H1 (cell line): ENCODE measurements at regions of chr10 and their contacts with region 1.

Region 1: DNA sequence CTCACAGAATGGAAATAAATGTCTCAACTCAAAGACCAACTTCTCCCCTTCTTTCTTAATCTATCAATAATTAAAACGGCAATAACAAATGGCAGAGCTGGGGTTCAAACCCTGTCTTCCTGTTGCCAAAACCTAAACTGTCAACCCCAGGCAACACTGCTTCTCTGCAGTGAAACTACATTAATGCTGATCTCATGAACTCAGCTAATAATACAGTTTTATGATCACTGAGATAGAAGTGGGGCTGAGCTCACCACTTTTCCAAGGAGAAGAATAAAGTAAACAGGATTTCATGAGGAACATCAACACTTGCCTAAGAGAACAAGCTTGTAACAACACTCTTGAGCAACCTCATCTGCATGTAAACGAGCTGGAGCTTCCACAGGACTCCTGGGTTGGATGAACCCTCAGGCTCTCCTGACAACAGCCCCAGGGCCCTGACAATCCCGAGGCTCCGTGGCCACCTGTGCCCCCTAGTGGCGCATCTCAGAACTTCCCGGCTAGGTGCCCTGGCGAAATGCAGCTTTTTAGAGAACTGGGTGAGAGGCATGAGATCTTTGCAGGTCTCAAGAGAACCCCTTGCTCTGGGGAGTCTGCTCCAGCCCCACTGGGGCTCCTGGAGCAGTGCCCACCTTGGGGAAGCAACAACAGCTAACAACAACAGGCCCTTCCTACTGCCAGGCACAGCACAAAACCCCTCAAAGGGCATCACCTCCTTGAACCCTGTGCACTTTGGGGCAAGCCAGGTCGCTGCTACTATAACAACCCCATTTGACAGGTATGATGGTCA is 169.3 kb downstream of the SH3PXD2A start:
- DNase-seq: peak; percentile 50 to 97
- H3K4me3 ChIP-seq: no peak overlapping the region
- H3K27ac ChIP-seq: no peak overlapping the region
- H3K4me1 ChIP-seq: peaks cover 0 to 10% (median 4%) of the 10 kb centered on the region in 4 experiments; a peak in 3 of 7 replicates
- H3K27me3 ChIP-seq: peaks cover 0 to 4% (median 0%) of the 10 kb centered on the region in 4 experiments; a peak in 1 of 7 replicates
- CTCF ChIP-seq: peak; percentile 96 to 98 (median 97)
- EP300 ChIP-seq: no peak
- POLR2A ChIP-seq: no peak
- RAD21 ChIP-seq: peak; percentile 92 to 98

Region 2: GRCh38 chr10:103491493-103492381 is 194.3 kb before region 1 on chr10:
- CTCF ChIA-PET with region 1: no interaction called
- POLR2A ChIA-PET with region 1: no interaction called
- DNase-seq: no peak
- H3K4me3 ChIP-seq: no peak overlapping the region
- H3K27ac ChIP-seq: no peak overlapping the region
- H3K4me1 ChIP-seq: peaks cover 0 to 4% (median 3%) of the 10 kb centered on the region in 4 experiments; a peak in 5 of 7 replicates
- H3K27me3 ChIP-seq: peaks cover 8 to 36% (median 28%) of the 10 kb centered on the region in 4 experiments
- CTCF ChIP-seq: no peak
- EP300 ChIP-seq: no peak
- POLR2A ChIP-seq: no peak
- RAD21 ChIP-seq: no peak

Region 3: DNA sequence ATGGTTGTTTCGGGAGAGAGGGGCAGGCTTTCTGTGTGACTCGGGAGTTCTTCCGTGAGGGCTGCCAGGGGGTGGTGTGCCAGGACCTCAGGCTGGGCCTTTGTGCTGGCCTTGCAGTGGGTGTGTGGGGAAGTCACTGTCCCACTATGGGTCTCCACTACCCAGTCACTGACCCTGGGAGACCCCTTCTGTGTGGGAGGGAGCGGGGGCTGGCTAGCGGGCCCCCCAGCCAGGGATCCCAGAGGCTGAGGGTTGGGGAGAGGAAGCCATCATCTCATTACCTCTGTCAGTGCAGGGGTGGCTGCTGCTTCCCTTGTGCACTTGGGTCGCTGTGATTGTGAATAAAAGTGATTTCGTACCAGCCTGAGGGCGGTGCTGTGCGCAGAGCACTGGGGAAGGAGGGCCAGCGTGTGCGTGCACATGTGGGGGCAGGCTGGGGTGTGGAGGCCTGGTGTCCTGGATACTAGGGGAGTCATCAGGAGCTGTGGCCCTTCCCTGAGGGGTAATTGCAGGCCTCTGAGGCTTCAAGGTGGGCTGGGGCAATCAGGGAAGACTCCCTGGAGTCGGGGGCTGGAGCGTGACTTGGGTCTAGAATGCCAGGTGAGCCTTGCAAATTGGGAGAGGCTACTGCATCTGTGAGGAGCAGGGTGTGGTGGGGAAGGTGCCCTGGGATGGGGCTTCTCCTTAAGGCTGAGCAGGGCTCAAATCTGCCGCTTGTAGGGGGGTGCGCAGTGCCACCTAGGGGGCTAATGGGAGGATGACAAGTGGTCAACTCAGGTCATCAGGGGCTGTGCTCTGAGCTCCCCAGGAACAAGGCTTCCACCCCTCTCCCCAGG is 93.7 kb before region 1 on chr10:
- CTCF ChIA-PET with region 1: interaction called, 448 read pairs
- POLR2A ChIA-PET with region 1: no interaction called
- DNase-seq: peak; percentile 46 to 87
- H3K4me3 ChIP-seq: no peak overlapping the region
- H3K27ac ChIP-seq: no peak overlapping the region
- H3K4me1 ChIP-seq: peaks cover 0 to 2% (median 0%) of the 10 kb centered on the region in 4 experiments; a peak in 1 of 7 replicates
- H3K27me3 ChIP-seq: no peaks in the 10 kb centered on the region; a peak in 2 of 7 replicates
- CTCF ChIP-seq: peak; percentile 84 to 93 (median 88)
- EP300 ChIP-seq: no peak
- POLR2A ChIP-seq: no peak
- RAD21 ChIP-seq: peak; percentile 78 to 88

Region 4: DNA sequence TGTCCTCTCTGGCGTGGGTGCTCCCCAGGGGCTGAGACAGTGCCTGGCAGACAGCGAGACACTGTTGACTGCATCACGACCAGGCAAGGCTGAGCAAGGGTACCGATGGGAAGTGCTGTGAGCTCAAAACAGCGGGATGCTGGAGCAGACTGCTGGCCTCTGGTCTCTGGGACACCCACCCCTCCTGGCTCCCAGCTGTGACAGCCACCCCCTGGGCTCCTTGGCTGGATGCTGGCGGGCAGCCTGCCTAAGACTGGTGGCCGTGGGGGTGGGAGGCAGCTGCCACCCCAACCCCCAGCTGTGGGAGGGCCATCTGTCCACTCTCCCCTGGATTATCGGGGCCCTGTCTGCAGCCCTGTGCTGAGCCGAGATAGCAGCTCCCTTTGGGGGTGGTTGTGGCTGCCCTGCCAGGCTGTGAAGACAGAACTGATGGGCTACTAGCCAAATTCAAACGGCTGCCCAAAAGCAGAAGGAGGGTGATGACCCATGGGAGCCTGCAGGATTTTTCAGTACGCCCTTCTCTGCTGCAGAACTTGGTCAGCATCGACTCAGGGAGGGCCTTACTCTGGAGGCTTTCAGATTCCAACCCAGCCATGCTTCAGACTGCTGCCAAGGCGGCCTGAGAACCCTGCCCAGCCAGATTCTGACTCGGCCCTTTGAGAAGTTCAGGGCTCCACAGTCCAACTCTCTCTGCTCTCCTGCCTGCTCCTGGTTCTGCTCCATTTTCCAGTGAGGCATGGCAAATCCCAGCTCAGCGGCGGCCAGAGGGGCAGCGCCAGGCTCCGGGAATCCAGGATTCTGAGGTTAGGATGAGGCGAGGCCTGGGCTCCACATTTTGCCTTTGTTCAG is 67.3 kb before region 1 on chr10:
- CTCF ChIA-PET with region 1: interaction called, 114 read pairs
- POLR2A ChIA-PET with region 1: no interaction called
- DNase-seq: no peak
- H3K4me3 ChIP-seq: no peak overlapping the region
- H3K27ac ChIP-seq: no peak overlapping the region
- H3K4me1 ChIP-seq: no peaks in the 10 kb centered on the region; a peak in 1 of 7 replicates
- H3K27me3 ChIP-seq: no peaks in the 10 kb centered on the region
- CTCF ChIP-seq: no peak
- EP300 ChIP-seq: no peak
- POLR2A ChIP-seq: no peak
- RAD21 ChIP-seq: no peak

Region 5: GRCh38 chr10:103659674-103660363 is 26.3 kb before region 1 on chr10:
- CTCF ChIA-PET with region 1: interaction called, 336 read pairs
- POLR2A ChIA-PET with region 1: interaction called, 3 read pairs
- DNase-seq: no peak
- H3K4me3 ChIP-seq: peak overlapping the region in 2 of 4 experiments; percentile 8 to 51; a peak in 1 of 8 replicates
- H3K27ac ChIP-seq: no peak overlapping the region
- H3K4me1 ChIP-seq: peaks cover 0 to 27% (median 18%) of the 10 kb centered on the region in 4 experiments; a peak in 6 of 7 replicates
- H3K27me3 ChIP-seq: no peaks in the 10 kb centered on the region; a peak in 1 of 7 replicates
- CTCF ChIP-seq: no peak
- EP300 ChIP-seq: no peak
- POLR2A ChIP-seq: no peak
- RAD21 ChIP-seq: no peak

Region 6: DNA sequence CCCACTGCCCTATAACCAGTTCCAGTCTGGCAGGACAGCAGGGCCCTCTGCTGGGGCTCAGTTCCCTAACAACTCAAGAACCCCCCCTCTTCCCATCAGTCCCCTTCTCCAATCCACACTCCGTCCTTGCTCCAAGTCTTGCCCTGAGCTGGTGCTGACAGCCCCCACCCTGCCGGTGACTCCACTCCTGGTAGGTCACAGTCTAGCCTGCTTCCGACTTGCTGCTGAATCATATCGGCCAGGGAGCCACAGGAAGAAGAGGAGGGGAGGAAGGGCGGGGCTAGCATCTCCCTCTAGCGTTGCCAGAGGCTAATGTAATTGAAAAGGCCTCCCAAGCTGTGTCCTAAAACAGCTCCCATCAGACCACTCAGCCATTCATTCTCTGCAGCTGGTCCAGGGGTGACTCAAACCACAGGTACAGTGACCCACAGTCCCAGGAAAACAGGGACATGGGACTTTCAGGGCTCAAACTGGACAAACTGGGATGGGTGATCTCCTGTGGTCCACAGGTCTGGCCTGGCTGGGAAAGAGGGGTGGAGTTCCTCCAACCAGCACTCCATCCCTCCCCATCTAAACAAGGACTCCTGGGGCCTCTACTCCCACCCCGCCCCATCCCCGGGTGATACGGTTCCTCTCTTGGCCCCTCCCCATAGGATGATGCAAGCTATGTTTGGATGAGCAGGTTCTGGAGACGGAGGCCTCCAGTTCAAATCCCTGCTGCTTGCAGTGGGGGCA is 10.5 kb after region 1 on chr10:
- CTCF ChIA-PET with region 1: interaction called, 19 read pairs
- POLR2A ChIA-PET with region 1: interaction called, 3 read pairs
- DNase-seq: peak; percentile 53 to 73
- H3K4me3 ChIP-seq: peak overlapping the region in 1 of 4 experiments; percentile 18; a peak in 1 of 8 replicates
- H3K27ac ChIP-seq: no peak overlapping the region
- H3K4me1 ChIP-seq: peaks cover 3 to 21% (median 14%) of the 10 kb centered on the region in 4 experiments
- H3K27me3 ChIP-seq: peaks cover 7 to 35% (median 30%) of the 10 kb centered on the region in 4 experiments
- CTCF ChIP-seq: peak; percentile 22 to 38 (median 37)
- EP300 ChIP-seq: no peak
- POLR2A ChIP-seq: no peak
- RAD21 ChIP-seq: peak; percentile 23 to 28; a peak in 3 of 4 replicates

Region 7: DNA sequence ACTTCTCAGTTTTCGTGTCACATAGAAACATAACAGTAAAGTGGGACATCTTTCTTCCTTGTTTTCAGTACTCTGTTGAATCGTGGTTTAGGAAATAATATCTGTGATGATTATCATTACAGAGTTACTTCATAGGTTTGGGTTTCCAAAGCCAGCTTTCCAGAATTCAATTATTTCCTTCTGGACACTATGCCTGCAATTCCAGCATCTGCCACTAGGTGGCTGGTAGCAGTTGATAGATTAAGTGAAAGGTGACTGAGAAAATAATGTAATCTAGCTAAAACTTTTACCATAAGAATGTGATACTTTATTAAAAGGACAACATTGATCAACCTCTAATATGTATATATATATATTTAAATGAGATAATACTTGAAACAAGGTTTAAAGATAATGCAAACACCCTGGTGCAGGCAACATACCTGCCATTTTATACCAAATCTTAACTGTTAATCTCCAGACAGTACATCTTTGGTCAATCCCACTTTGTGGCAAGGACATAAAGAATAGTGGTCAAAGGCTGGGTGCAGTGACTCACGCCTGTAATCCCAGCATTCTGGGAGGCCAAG is 66.7 kb after region 1 on chr10:
- CTCF ChIA-PET with region 1: interaction called, 14 read pairs
- POLR2A ChIA-PET with region 1: no interaction called
- DNase-seq: peak in 1 of 2 experiments; percentile 76
- H3K4me3 ChIP-seq: no peak overlapping the region
- H3K27ac ChIP-seq: no peak overlapping the region
- H3K4me1 ChIP-seq: peaks cover 4 to 11% (median 7%) of the 10 kb centered on the region in 4 experiments
- H3K27me3 ChIP-seq: no peaks in the 10 kb centered on the region
- CTCF ChIP-seq: peak in 2 of 3 experiments; percentile 46 to 73; a peak in 2 of 4 replicates
- EP300 ChIP-seq: no peak
- POLR2A ChIP-seq: no peak
- RAD21 ChIP-seq: peak; percentile 23 to 43; a peak in 2 of 4 replicates

Region 8: GRCh38 chr10:103820101-103821062 is 134.3 kb after region 1 on chr10:
- CTCF ChIA-PET with region 1: no interaction called
- POLR2A ChIA-PET with region 1: no interaction called
- DNase-seq: no peak
- H3K4me3 ChIP-seq: no peak overlapping the region
- H3K27ac ChIP-seq: no peak overlapping the region
- H3K4me1 ChIP-seq: peaks cover 0 to 4% (median under 1%) of the 10 kb centered on the region in 4 experiments; a peak in 4 of 7 replicates
- H3K27me3 ChIP-seq: no peaks in the 10 kb centered on the region
- CTCF ChIP-seq: no peak
- EP300 ChIP-seq: no peak
- POLR2A ChIP-seq: no peak
- RAD21 ChIP-seq: no peak

Region 9: GRCh38 chr10:104284846-104285245 is 598.8 kb after region 1 on chr10:
- CTCF ChIA-PET with region 1: no interaction called
- POLR2A ChIA-PET with region 1: no interaction called
- DNase-seq: no peak
- H3K4me3 ChIP-seq: no peak overlapping the region
- H3K27ac ChIP-seq: no peak overlapping the region
- H3K4me1 ChIP-seq: no peaks in the 10 kb centered on the region
- H3K27me3 ChIP-seq: no peaks in the 10 kb centered on the region
- CTCF ChIP-seq: no peak
- EP300 ChIP-seq: no peak
- POLR2A ChIP-seq: no peak
- RAD21 ChIP-seq: no peak